Naive thymus-derived CD4-positive, alpha-beta T cell (primary cell): ENCODE measurements at regions of chr20 and their contacts with region 1.

Region 1: DNA sequence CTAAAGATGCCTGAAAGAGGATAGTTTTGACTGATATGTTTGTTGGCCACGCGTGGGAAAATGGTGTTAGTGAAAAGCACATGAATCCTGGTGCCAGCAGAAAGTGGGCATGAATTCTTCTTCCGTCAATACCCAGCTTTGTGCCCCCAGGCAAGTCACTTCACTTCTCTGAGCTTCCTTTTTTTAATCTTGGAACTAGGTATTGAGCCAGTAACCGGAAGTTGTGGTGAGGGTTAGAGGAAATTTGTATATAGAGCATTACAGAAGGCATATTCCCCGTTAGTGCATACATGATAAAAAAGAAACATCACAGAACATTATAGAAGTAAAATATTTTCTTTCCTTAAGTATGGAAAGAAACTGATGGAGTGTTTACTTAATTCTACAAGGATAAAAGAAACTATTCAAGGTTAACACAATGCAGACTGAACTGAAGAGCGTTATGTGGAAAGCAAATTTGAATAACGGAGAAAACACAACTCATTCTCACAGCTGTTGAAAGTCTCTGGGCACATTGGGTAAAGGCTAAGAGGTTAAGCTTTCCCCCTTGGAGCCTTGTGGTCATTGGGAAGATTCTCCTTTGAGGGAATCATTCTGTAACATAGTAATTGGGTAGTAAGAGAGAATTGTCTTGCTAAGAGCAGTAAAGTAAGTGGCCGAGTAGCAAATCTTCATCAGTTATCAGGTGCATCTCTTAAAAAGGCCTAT is 223.1 kb downstream of the BCAS1 start:
- DNase-seq: peak in 5 of 9 donors; percentile 31 to 57 (median 47)
- ATAC-seq: peak; percentile 72
- H3K4me3 ChIP-seq: no peak overlapping the region
- H3K4me3 Mint-ChIP-seq: peak overlapping the region; percentile 58 to 89 (median 78)
- H3K27ac ChIP-seq: peak overlapping the region; percentile 1
- H3K27ac Mint-ChIP-seq: peak overlapping the region; percentile 58 to 94 (median 88)
- H3K4me1 ChIP-seq: peaks cover 47 to 61% of the 10 kb centered on the region in 2 donors
- H3K4me1 Mint-ChIP-seq: peaks cover 43 to 77% (median 58%) of the 10 kb centered on the region in 7 donors
- H3K27me3 ChIP-seq: no peaks in the 10 kb centered on the region
- H3K27me3 Mint-ChIP-seq: no peaks in the 10 kb centered on the region

Region 2: DNA sequence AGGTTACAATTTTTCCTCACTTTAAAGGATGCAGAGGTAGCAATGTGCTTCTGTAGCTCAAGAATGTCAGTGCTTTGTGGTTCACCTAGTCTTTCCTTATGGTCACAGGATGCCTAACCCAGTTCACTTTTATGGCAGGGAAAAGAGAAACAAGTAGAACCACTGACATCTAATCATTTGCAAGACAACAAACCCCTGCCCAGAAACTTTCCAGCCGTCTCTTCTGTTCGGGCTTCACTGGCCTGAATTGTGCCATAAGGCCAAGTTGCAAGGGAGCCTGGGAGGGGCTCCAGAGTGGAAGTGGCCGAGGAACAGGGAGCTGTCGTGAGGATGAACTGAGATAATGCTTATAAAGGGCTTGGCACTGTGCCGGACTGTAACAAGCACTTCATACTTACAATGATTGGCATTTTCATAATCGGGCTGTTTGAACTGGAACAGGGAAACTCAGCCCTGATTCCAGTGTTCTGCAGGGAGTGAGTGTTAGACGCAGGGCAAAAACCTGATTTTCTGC is 10.5 kb after region 1 on chr20:
- CTCF ChIA-PET with region 1: interaction called, 4 read pairs
- POLR2A ChIA-PET with region 1: interaction called, 19 read pairs
- intact Hi-C with region 1: no loop called
- DNase-seq: no peak
- ATAC-seq: no peak
- H3K4me3 ChIP-seq: no peak overlapping the region
- H3K4me3 Mint-ChIP-seq: peak overlapping the region in 1 of 10 donors; percentile 8
- H3K27ac ChIP-seq: no peak overlapping the region
- H3K27ac Mint-ChIP-seq: peak overlapping the region in 6 of 9 donors; percentile 12 to 59 (median 44)
- H3K4me1 ChIP-seq: no peaks in the 10 kb centered on the region
- H3K4me1 Mint-ChIP-seq: peaks cover 21 to 39% (median 35%) of the 10 kb centered on the region in 7 donors
- H3K27me3 ChIP-seq: no peaks in the 10 kb centered on the region
- H3K27me3 Mint-ChIP-seq: no peaks in the 10 kb centered on the region